CD8-positive, alpha-beta T cell (primary cell): ENCODE measurements at regions of chr2 and their contacts with region 1.

Region 1: DNA sequence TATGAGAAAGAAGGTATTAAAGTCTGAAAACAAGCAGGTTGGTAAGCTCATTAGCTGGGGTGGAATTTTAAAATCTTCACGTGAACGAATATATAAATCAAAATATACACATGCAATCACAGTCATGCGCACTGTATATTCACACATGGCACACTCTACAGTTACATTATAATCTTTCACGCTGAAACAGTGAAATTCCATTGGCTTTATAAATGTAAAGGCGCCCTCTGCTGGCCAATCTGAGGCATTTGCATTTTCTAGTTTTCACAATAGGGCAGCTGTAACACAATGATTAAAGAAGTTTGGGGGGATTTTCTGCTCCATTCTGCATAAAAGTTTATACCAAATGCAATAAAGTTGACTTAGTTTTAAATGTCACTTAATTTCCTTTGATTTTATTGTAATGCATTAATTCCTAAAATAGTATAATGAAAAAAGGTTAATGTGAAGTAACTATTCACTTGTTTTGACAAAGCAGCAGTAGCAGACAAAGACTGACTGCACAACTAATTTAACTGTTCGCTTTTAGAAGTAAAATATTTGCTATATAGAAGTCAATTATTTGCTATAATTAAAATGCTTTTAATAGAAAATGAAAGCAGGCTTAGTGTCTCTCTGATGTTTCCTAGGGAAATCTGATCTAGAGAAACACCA is 17.2 kb downstream of the IFIH1 start:
- DNase-seq: peak in 8 of 9 experiments; percentile 37 to 78 (median 60)
- ATAC-seq: peak; percentile 83
- H3K4me3 ChIP-seq: no peak overlapping the region
- H3K4me3 Mint-ChIP-seq: no peak overlapping the region
- H3K27ac ChIP-seq: no peak overlapping the region
- H3K27ac Mint-ChIP-seq: no peak overlapping the region
- H3K4me1 ChIP-seq: no peaks in the 10 kb centered on the region
- H3K4me1 Mint-ChIP-seq: peaks cover 2% of the 10 kb centered on the region
- H3K27me3 ChIP-seq: no peaks in the 10 kb centered on the region
- H3K27me3 Mint-ChIP-seq: no peaks in the 10 kb centered on the region
- CTCF ChIP-seq: peak; percentile 98

Region 2: GRCh38 chr2:161223139-161223732 is 1078.0 kb before region 1 on chr2:
- CTCF ChIA-PET with region 1: no interaction called
- POLR2A ChIA-PET with region 1: no interaction called
- intact Hi-C with region 1: loop called in 1 of 2 experiments (anchors 5 kb)
- DNase-seq: peak in 4 of 9 experiments; percentile 20 to 69 (median 44)
- ATAC-seq: peak; percentile 87
- H3K4me3 ChIP-seq: no peak overlapping the region
- H3K4me3 Mint-ChIP-seq: no peak overlapping the region
- H3K27ac ChIP-seq: no peak overlapping the region
- H3K27ac Mint-ChIP-seq: no peak overlapping the region
- H3K4me1 ChIP-seq: no peaks in the 10 kb centered on the region
- H3K4me1 Mint-ChIP-seq: no peaks in the 10 kb centered on the region
- H3K27me3 ChIP-seq: no peaks in the 10 kb centered on the region
- H3K27me3 Mint-ChIP-seq: no peaks in the 10 kb centered on the region
- CTCF ChIP-seq: peak; percentile 94

Region 3: GRCh38 chr2:161946489-161947107 is 354.7 kb before region 1 on chr2:
- CTCF ChIA-PET with region 1: no interaction called
- POLR2A ChIA-PET with region 1: no interaction called
- intact Hi-C with region 1: loop called in 1 of 2 experiments (anchors 10 kb)
- DNase-seq: peak in 2 of 9 experiments; percentile 35 to 38
- ATAC-seq: no peak
- H3K4me3 ChIP-seq: no peak overlapping the region
- H3K4me3 Mint-ChIP-seq: no peak overlapping the region
- H3K27ac ChIP-seq: no peak overlapping the region
- H3K27ac Mint-ChIP-seq: no peak overlapping the region
- H3K4me1 ChIP-seq: no peaks in the 10 kb centered on the region
- H3K4me1 Mint-ChIP-seq: peaks cover 3% of the 10 kb centered on the region
- H3K27me3 ChIP-seq: no peaks in the 10 kb centered on the region
- H3K27me3 Mint-ChIP-seq: no peaks in the 10 kb centered on the region
- CTCF ChIP-seq: peak; percentile 66

Region 4: GRCh38 chr2:162123806-162124758 is 177.2 kb before region 1 on chr2:
- CTCF ChIA-PET with region 1: no interaction called
- POLR2A ChIA-PET with region 1: no interaction called
- intact Hi-C with region 1: no loop called
- DNase-seq: peak in 3 of 9 experiments; percentile 22 to 77 (median 72)
- ATAC-seq: peak; percentile 71
- H3K4me3 ChIP-seq: no peak overlapping the region
- H3K4me3 Mint-ChIP-seq: no peak overlapping the region
- H3K27ac ChIP-seq: no peak overlapping the region
- H3K27ac Mint-ChIP-seq: no peak overlapping the region
- H3K4me1 ChIP-seq: no peaks in the 10 kb centered on the region
- H3K4me1 Mint-ChIP-seq: no peaks in the 10 kb centered on the region
- H3K27me3 ChIP-seq: no peaks in the 10 kb centered on the region
- H3K27me3 Mint-ChIP-seq: no peaks in the 10 kb centered on the region
- CTCF ChIP-seq: peak; percentile 96

Region 5: DNA sequence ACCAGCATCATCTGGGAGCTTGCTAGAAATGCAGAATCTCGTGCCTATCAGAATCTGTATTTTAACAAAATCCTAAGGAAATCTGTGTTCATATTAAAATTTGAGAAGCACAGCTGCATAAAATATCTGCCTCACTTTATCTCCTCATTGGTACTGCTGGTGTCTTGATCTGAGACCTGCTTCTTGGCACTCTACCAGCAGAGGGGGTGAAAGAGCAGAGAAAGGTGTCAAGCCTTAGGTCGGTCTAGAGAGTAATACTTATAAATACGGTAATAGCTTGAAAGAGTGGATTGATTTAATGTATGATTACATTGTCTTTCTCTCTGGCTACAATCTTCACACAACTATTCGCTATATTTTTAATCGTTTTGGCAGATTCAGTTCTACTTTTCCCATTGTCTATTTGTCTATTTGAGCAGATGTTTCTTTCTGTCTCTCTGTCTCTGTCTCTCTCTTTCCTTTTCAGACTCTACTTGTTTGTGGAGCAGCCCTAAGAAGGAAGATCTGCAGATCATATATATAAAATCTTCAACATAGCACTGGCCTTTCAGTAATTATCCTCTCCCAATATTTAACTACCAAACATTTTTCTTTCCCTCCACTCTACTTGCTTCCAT is 147.6 kb before region 1 on chr2:
- CTCF ChIA-PET with region 1: interaction called, 10 read pairs
- POLR2A ChIA-PET with region 1: no interaction called
- intact Hi-C with region 1: loop called (anchors 1 to 5 kb)
- DNase-seq: peak; percentile 8 to 72 (median 57)
- ATAC-seq: peak; percentile 83
- H3K4me3 ChIP-seq: no peak overlapping the region
- H3K4me3 Mint-ChIP-seq: peak overlapping the region; percentile 19
- H3K27ac ChIP-seq: no peak overlapping the region
- H3K27ac Mint-ChIP-seq: no peak overlapping the region
- H3K4me1 ChIP-seq: no peaks in the 10 kb centered on the region
- H3K4me1 Mint-ChIP-seq: no peaks in the 10 kb centered on the region
- H3K27me3 ChIP-seq: no peaks in the 10 kb centered on the region
- H3K27me3 Mint-ChIP-seq: peaks cover 35% of the 10 kb centered on the region
- CTCF ChIP-seq: peak; percentile 74

Region 6: GRCh38 chr2:162318328-162319180 is 17.3 kb after region 1 on chr2 and contains the start of gene IFIH1:
- CTCF ChIA-PET with region 1: interaction called, 27 read pairs
- POLR2A ChIA-PET with region 1: interaction called, 3 read pairs
- intact Hi-C with region 1: loop called in 1 of 2 experiments (anchors 2 kb)
- DNase-seq: peak; percentile 40 to 94 (median 68)
- ATAC-seq: peak; percentile 82
- H3K4me3 ChIP-seq: peak within 1 kb of the TSS; percentile 64 to 76
- H3K4me3 Mint-ChIP-seq: peak within 1 kb of the TSS; percentile 97
- H3K27ac ChIP-seq: peak within 1 kb of the TSS; percentile 92 to 95
- H3K27ac Mint-ChIP-seq: peak within 1 kb of the TSS; percentile 99
- H3K4me1 ChIP-seq: peaks cover 45% of the 10 kb centered on the region
- H3K4me1 Mint-ChIP-seq: peaks cover 65% of the 10 kb centered on the region
- H3K27me3 ChIP-seq: no peaks in the 10 kb centered on the region
- H3K27me3 Mint-ChIP-seq: no peaks in the 10 kb centered on the region
- CTCF ChIP-seq: no peak
- total RNA-seq, gene IFIH1: 30.8 to 32.5 TPM

Region 7: GRCh38 chr2:162343824-162344616 is 42.7 kb after region 1 on chr2 and contains the start of gene GCA:
- CTCF ChIA-PET with region 1: interaction called, 3 read pairs
- POLR2A ChIA-PET with region 1: no interaction called
- intact Hi-C with region 1: loop called in 1 of 2 experiments (anchors 5 kb)
- DNase-seq: peak; percentile 95 to 98 (median 98)
- ATAC-seq: peak; percentile 98
- H3K4me3 ChIP-seq: peak within 1 kb of the TSS; percentile 71 to 81
- H3K4me3 Mint-ChIP-seq: peak within 1 kb of the TSS; percentile 91
- H3K27ac ChIP-seq: peak within 1 kb of the TSS in 1 of 2 experiments; percentile 34
- H3K27ac Mint-ChIP-seq: peak within 1 kb of the TSS; percentile 80
- H3K4me1 ChIP-seq: peaks cover 8% of the 10 kb centered on the region
- H3K4me1 Mint-ChIP-seq: peaks cover 17% of the 10 kb centered on the region
- H3K27me3 ChIP-seq: no peaks in the 10 kb centered on the region
- H3K27me3 Mint-ChIP-seq: no peaks in the 10 kb centered on the region
- CTCF ChIP-seq: no peak
- total RNA-seq, gene GCA: 3.2 to 4.0 TPM